Activated B cell treated with CpG ODN at 0.5 μM for 24 hours (primary cell): ENCODE measurements at regions of chr3 and their contacts with region 1.

Region 1: GRCh38 chr3:18389108-18389733 is 35.9 kb downstream of the SATB1 start:
- DNase-seq: no peak
- ATAC-seq: no peak
- H3K4me3 Mint-ChIP-seq: no peak overlapping the region
- H3K27ac Mint-ChIP-seq: no peak overlapping the region
- H3K4me1 Mint-ChIP-seq: no peaks in the 10 kb centered on the region
- H3K27me3 Mint-ChIP-seq: no peaks in the 10 kb centered on the region
- CTCF ChIP-seq: peak; percentile 10

Region 2: DNA sequence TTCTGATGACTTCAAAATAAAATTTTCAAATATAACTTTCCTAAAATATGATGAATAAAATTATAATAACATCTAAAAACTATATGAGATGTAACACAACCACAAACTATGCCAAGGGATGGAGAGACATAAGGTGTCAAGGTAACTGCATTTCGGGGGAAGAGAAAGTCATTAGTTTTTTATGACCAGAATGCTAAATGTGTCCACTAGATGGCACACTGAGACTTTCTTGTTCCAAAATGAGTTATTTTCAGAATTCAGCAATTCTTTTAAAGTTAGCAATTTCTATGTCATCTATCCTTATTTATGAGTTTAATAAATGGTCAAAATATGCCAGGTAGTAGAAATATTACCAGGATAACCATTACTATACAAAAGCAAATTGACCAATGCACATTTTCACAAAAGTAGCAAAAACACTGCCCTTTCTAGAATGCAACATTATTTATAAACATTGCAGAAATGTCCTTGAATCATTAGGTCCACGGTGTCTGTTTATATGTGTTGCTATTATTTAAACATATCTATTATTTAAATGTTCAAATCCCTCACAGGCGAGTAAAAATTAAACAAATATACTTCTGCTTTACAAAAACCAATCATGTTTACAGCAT is 1130.3 kb before region 1 on chr3:
- CTCF ChIA-PET with region 1: no interaction called
- POLR2A ChIA-PET with region 1: no interaction called
- intact Hi-C with region 1: loop called (anchors 2 kb)
- DNase-seq: no peak
- ATAC-seq: no peak
- H3K4me3 Mint-ChIP-seq: no peak overlapping the region
- H3K27ac Mint-ChIP-seq: no peak overlapping the region
- H3K4me1 Mint-ChIP-seq: no peaks in the 10 kb centered on the region
- H3K27me3 Mint-ChIP-seq: no peaks in the 10 kb centered on the region
- CTCF ChIP-seq: peak; percentile 73

Region 3: DNA sequence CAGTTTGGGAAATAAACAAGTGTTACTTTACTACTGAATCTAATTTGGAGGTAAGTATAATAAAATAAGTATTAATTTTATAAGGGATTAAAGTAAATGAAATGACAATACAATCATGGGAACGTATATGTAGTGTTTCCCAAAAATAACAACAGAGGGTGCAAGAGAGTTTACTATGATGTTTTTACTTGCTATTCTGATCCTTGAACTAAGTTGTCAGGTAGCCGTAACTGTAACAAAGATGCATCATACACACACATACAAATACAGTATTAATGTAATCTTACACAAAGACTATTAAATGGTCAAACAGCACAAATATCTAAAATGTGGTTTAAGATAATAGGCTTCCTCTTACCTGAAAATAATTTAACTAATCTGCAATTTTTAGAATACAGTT is 958.2 kb before region 1 on chr3:
- CTCF ChIA-PET with region 1: interaction called, 3 read pairs
- POLR2A ChIA-PET with region 1: no interaction called
- intact Hi-C with region 1: loop called (anchors 2 kb)
- DNase-seq: no peak
- ATAC-seq: no peak
- H3K4me3 Mint-ChIP-seq: no peak overlapping the region
- H3K27ac Mint-ChIP-seq: no peak overlapping the region
- H3K4me1 Mint-ChIP-seq: no peaks in the 10 kb centered on the region
- H3K27me3 Mint-ChIP-seq: no peaks in the 10 kb centered on the region
- CTCF ChIP-seq: peak; percentile 23

Region 4: GRCh38 chr3:17894434-17895060 is 494.7 kb before region 1 on chr3:
- CTCF ChIA-PET with region 1: interaction called, 15 read pairs
- POLR2A ChIA-PET with region 1: no interaction called
- intact Hi-C with region 1: loop called (anchors 1 kb)
- DNase-seq: no peak
- ATAC-seq: no peak
- H3K4me3 Mint-ChIP-seq: no peak overlapping the region
- H3K27ac Mint-ChIP-seq: no peak overlapping the region
- H3K4me1 Mint-ChIP-seq: no peaks in the 10 kb centered on the region
- H3K27me3 Mint-ChIP-seq: no peaks in the 10 kb centered on the region
- CTCF ChIP-seq: no peak

Region 5: GRCh38 chr3:17979252-17979651 is 410.0 kb before region 1 on chr3:
- CTCF ChIA-PET with region 1: no interaction called
- POLR2A ChIA-PET with region 1: no interaction called
- intact Hi-C with region 1: loop called (anchors 5 kb)
- DNase-seq: no peak
- ATAC-seq: no peak
- H3K4me3 Mint-ChIP-seq: no peak overlapping the region
- H3K27ac Mint-ChIP-seq: no peak overlapping the region
- H3K4me1 Mint-ChIP-seq: no peaks in the 10 kb centered on the region
- H3K27me3 Mint-ChIP-seq: peaks cover 16% of the 10 kb centered on the region
- CTCF ChIP-seq: no peak

Region 6: GRCh38 chr3:17995769-17996168 is 393.5 kb before region 1 on chr3:
- CTCF ChIA-PET with region 1: interaction called, 3 read pairs
- POLR2A ChIA-PET with region 1: no interaction called
- intact Hi-C with region 1: loop called (anchors 1 kb)
- DNase-seq: no peak
- ATAC-seq: no peak
- H3K4me3 Mint-ChIP-seq: no peak overlapping the region
- H3K27ac Mint-ChIP-seq: no peak overlapping the region
- H3K4me1 Mint-ChIP-seq: no peaks in the 10 kb centered on the region
- H3K27me3 Mint-ChIP-seq: no peaks in the 10 kb centered on the region
- CTCF ChIP-seq: no peak